Pancreas (tissue), 10 donors: ENCODE measurements at regions of chr3 and their contacts with region 1.

Region 1: DNA sequence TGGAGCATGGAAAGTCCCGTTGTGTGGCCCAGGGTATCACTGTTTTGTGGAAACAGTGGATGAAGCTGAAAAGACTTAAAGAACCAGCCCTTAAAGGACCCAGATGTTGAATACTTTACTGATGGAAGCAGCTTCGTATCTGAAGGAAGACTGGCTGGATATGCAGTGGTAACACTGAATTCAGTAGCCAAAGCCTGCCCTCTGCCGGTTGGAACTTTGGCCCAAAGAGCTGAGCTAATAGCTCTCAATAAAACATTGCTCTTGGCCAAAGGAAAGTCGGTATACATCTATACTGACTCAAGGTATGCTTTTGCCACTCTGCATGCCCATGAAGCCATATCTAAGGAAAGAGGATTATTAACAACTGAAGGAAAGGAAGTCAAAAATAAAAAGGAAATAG is 885.4 kb downstream of the PDCD6IP start:
- DNase-seq: peak in 5 of 6 donors; percentile 21 to 76 (median 49)
- ATAC-seq: peak in 3 of 4 donors; percentile 52 to 65 (median 55)
- H3K4me3 ChIP-seq: no peak overlapping the region
- H3K27ac ChIP-seq: no peak overlapping the region
- H3K4me1 ChIP-seq: no peaks in the 10 kb centered on the region
- H3K27me3 ChIP-seq: no peaks in the 10 kb centered on the region
- CTCF ChIP-seq: peak; percentile 15 to 38 (median 33)

Region 2: DNA sequence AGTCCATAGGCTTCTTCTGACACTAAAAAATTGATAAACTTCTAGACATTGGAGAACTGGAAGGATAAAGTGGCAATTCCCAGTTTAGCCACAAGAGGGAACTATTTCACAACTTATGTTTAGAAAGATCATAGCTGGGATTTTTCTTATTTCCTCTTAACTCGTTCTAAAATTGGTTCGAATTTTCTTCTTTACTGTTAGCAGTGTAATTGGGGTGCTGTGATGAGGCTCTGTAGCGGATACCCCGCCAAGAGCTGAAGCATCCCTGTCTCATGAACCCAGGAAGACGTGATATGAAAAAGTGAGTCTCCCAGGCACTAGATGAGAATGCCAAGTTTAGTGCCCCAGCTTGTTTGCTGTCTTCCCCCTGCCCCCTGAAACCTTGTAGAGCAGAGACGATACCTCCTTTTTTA is 800.3 kb before region 1 on chr3:
- intact Hi-C with region 1: loop called in 2 of 3 experiments (anchors 10 kb)
- DNase-seq: no peak
- ATAC-seq: peak; percentile 56 to 77 (median 68)
- H3K4me3 ChIP-seq: no peak overlapping the region
- H3K27ac ChIP-seq: no peak overlapping the region
- H3K4me1 ChIP-seq: no peaks in the 10 kb centered on the region
- H3K27me3 ChIP-seq: no peaks in the 10 kb centered on the region
- CTCF ChIP-seq: peak; percentile 74 to 84 (median 80)

Region 3: GRCh38 chr3:34758630-34759261 is 74.9 kb after region 1 on chr3:
- intact Hi-C with region 1: no loop called
- DNase-seq: peak in 1 of 6 donors; percentile 41
- ATAC-seq: no peak
- H3K4me3 ChIP-seq: no peak overlapping the region
- H3K27ac ChIP-seq: no peak overlapping the region
- H3K4me1 ChIP-seq: no peaks in the 10 kb centered on the region
- H3K27me3 ChIP-seq: no peaks in the 10 kb centered on the region
- CTCF ChIP-seq: no peak

Region 4: GRCh38 chr3:35291837-35292236 is 608.0 kb after region 1 on chr3:
- intact Hi-C with region 1: no loop called
- DNase-seq: no peak
- ATAC-seq: no peak
- H3K4me3 ChIP-seq: no peak overlapping the region
- H3K27ac ChIP-seq: no peak overlapping the region
- H3K4me1 ChIP-seq: no peaks in the 10 kb centered on the region
- H3K27me3 ChIP-seq: no peaks in the 10 kb centered on the region
- CTCF ChIP-seq: no peak